ENCODE measurements at regions of chr12 and their contacts with region 1.

Region 1: DNA sequence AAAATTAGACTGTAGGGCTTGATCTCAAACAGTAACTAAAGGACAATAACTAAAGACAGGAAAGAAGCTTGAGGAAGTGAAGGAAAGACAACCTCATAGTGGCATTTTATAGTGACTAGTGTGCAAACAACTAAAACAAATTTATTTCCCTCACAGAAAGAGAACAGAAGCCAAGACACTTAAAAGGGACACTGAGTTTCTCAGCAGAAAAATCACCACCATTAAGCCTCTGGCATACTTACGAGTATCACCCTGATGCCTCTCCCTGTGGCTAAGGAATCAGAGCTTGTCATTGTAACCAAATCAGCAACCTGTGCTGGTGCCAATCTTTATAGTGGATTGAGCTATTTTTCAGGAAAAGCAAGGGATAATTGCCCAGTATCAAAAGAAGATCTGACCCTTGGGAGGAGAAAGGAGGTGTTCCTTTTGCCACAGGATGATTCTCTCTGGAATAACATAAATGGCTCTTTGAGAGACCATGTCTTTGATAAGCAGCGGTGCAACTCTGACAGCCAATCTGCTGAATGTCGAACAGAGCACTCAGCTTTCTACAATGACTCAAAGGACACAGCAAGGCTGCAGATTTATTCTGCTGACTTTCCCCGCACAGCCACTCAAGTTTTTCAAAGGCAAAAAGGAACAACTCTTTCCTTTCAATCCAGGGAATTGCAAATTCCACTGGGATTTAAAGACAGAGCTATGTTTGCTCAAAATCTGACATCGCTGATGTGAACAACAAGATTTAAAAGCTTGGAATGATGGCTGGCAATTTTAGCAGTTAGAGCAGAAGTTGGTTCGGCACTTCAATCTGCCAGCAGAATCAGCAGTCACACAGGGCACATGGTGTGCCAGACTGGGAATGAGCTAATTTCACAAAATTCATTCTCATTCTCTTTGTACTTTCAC is 34.6 kb downstream of the ATF7 start:
- DNase-seq: peak; percentile 42
- H3K4me3 ChIP-seq: no peak overlapping the region
- H3K27ac ChIP-seq: no peak overlapping the region
- H3K4me1 ChIP-seq: peaks cover 47% of the 10 kb centered on the region
- H3K27me3 ChIP-seq: no peaks in the 10 kb centered on the region
- CTCF ChIP-seq: no peak
- POLR2A ChIP-seq: no peak

Region 2: DNA sequence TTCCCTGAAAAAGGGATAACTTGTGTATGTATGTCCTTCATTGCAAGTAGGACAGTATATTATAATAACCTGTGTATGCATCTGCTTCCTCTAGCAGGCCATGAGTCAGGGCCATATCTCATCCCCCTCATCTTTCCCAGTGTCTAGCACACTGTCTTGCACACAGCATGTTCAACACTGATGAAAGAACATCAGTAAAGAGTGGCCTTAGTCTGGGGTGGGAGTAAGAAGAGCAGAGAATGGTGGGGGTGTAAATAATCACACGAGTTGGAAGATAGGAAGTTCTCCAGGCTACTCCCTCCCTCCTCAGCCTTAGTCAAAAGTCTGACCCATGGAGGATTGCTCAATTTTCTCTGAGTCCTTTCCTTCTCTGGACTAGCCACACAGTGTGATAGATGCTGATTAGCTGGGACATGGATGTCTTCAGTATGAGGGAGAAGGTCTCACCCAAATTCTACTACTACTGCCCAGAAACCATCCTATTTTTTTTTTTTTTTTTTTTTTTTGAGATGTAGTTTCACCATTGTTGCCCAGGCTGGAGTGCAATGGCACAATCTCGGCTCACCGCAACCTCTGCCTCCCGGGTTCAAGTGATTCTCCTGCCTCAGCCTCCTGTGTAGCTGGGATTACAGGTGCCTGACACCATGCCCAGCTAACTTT is 226.2 kb before region 1 on chr12:
- CTCF ChIA-PET with region 1: no interaction called
- POLR2A ChIA-PET with region 1: no interaction called
- dilution Hi-C with region 1: no loop called
- intact Hi-C with region 1: no loop called
- DNase-seq: no peak
- H3K4me3 ChIP-seq: no peak overlapping the region
- H3K27ac ChIP-seq: no peak overlapping the region
- H3K4me1 ChIP-seq: peaks cover under 1% of the 10 kb centered on the region
- H3K27me3 ChIP-seq: no peaks in the 10 kb centered on the region
- CTCF ChIP-seq: no peak
- POLR2A ChIP-seq: no peak

Region 3: GRCh38 chr12:53568809-53569557 is 22.6 kb before region 1 on chr12:
- CTCF ChIA-PET with region 1: interaction called, 11 read pairs
- POLR2A ChIA-PET with region 1: interaction called, 3 read pairs
- dilution Hi-C with region 1: no loop called
- intact Hi-C with region 1: no loop called
- DNase-seq: no peak
- H3K4me3 ChIP-seq: no peak overlapping the region
- H3K27ac ChIP-seq: no peak overlapping the region
- H3K4me1 ChIP-seq: no peaks in the 10 kb centered on the region
- H3K27me3 ChIP-seq: no peaks in the 10 kb centered on the region
- CTCF ChIP-seq: no peak
- POLR2A ChIP-seq: no peak